Endothelial cell of umbilical vein (primary cell): ENCODE measurements at regions of chr1 and their contacts with region 1.

Region 1: GRCh38 chr1:110196917-110197765 is 13.0 kb upstream of the KCNC4 start:
- DNase-seq: peak; percentile 34
- H3K4me3 ChIP-seq: no peak overlapping the region
- H3K27ac ChIP-seq: no peak overlapping the region
- H3K4me1 ChIP-seq: no peaks in the 10 kb centered on the region
- H3K27me3 ChIP-seq: no peaks in the 10 kb centered on the region
- CTCF ChIP-seq: peak; percentile 75 to 92
- POLR2A ChIP-seq: no peak

Region 2: DNA sequence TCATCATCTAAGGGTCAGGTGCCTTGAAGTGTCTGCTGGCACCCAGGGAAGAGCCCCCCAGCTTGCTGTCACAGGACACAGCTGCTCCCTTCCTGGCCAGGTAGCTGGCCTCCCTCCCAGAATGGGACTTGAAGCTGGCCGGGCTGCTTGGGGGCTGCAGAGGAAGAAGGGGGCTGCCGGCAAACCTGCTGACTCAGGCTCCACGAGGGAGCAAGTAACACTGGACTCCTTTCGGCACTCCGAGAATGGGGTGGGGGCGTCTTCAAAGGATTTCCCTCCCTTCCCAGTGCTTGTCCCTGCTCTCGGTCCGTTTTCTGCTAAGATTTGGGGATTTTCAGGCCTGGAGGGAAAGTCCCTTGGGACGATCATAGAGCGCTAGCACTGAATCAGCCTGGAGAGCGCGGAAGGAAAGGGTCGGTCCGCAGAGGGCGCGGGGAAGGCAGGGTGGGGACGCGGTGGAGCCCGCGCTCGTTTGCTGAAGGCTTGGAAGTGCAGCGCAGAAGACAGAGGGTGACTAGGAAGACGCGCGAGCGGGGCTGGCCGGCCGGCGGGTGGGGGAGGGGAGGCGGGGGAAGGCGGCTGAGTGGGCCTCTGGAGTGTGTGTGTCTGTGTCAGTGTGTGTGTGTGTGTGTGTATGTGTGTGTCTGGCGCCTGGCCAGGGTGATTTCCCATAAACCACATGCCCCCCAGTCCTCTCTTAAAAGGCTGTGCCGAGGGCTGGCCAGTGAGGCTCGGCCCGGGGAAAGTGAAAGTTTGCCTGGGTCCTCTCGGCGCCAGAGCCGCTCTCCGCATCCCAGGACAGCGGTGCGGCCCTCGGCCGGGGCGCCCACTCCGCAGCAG is 286.8 kb before region 1 on chr1 and contains the start of gene CSF1:
- CTCF ChIA-PET with region 1: no interaction called
- POLR2A ChIA-PET with region 1: no interaction called
- dilution Hi-C with region 1: no loop called
- intact Hi-C with region 1: no loop called
- DNase-seq: peak; percentile 77
- H3K4me3 ChIP-seq: peak within 1 kb of the TSS; percentile 36 to 91 (median 45)
- H3K27ac ChIP-seq: peak within 1 kb of the TSS; percentile 45
- H3K4me1 ChIP-seq: peaks cover 8% of the 10 kb centered on the region
- H3K27me3 ChIP-seq: peaks cover 0 to 4% of the 10 kb centered on the region in 2 experiments
- CTCF ChIP-seq: no peak
- POLR2A ChIP-seq: no peak
- total RNA-seq, gene CSF1: 22.7 and 28.9 TPM in 2 replicates

Region 3: DNA sequence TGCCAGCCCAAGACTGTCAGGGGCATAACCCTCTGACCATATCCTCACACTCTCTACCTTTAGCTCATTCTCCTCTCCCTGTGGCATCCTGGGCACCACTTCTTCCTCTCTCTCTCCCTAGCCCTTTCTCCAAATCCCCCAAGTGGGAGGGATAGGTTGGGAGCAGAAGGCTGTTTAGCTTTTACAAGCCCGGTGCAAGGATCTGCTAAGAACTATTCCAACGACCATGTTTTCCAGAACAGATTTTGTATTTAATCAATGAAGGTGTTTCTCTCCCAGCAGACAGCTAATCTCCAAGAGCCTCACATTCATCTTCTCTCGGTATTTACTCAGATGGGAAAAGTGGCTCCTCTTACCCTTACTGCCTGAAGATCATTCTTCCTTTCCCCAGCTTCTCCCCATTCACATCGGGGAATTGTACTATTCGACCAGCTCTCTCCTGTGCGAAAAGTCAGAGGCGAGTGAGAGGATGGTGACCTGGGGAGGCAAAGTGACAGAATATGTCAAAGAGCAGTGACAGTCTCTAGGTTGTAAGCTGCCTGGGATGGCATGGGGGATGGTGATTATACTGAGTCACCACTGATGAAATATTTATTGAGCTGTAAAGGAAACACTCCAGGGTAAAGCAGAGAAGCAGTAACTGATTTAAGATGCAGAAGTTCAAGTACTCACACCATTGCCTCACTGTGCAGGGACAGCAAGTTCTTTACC is 95.0 kb after region 1 on chr1:
- CTCF ChIA-PET with region 1: interaction called, 1,577 read pairs
- POLR2A ChIA-PET with region 1: no interaction called
- dilution Hi-C with region 1: no loop called
- intact Hi-C with region 1: no loop called
- DNase-seq: peak; percentile 12
- H3K4me3 ChIP-seq: no peak overlapping the region
- H3K27ac ChIP-seq: no peak overlapping the region
- H3K4me1 ChIP-seq: no peaks in the 10 kb centered on the region
- H3K27me3 ChIP-seq: peaks cover 5 to 9% of the 10 kb centered on the region in 2 experiments
- CTCF ChIP-seq: no peak
- POLR2A ChIP-seq: no peak

Region 4: DNA sequence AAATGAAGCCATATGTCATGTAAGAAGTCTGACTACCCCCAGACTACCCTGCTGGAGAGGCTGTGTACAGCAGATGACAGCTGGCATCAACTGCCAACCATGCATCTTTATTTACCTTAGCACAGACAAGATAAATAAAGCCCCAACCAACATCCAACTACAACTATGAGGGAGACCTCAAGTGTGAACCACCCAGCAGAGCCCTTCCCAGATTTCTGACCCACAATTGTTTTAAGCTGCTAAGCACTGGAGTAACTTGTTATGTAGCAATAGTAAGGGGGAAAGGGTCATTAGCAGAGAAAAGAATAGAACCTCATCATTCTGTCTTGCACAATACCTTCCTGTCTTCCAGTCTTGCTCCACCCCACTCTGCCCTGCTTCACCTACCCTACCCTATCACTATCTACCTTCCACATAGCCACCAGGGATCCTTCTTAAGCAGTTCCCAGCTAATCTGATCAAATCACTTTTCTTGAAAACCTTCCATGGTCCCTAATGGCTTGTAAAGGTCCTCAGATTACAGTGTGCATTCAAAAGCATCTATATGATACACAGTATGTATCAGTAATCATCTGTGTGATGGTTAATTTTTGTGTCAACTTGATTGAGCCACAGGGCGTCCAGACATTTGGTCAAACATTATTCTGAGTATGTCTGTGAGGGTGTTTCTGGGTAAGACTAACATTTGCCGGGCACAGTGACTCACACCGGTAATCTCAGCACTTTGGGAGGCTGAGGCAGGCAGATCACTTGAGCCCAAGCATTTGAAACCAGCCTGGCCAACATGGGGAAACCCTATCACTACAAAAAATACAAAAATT is 122.4 kb after region 1 on chr1:
- CTCF ChIA-PET with region 1: interaction called, 1,577 read pairs
- POLR2A ChIA-PET with region 1: no interaction called
- dilution Hi-C with region 1: no loop called
- intact Hi-C with region 1: no loop called
- DNase-seq: no peak
- H3K4me3 ChIP-seq: no peak overlapping the region
- H3K27ac ChIP-seq: no peak overlapping the region
- H3K4me1 ChIP-seq: no peaks in the 10 kb centered on the region
- H3K27me3 ChIP-seq: no peaks in the 10 kb centered on the region
- CTCF ChIP-seq: no peak
- POLR2A ChIP-seq: no peak

Region 5: GRCh38 chr1:110780600-110781484 is 583.7 kb after region 1 on chr1:
- CTCF ChIA-PET with region 1: no interaction called
- POLR2A ChIA-PET with region 1: no interaction called
- dilution Hi-C with region 1: no loop called
- intact Hi-C with region 1: no loop called
- DNase-seq: peak; percentile 82
- H3K4me3 ChIP-seq: no peak overlapping the region
- H3K27ac ChIP-seq: no peak overlapping the region
- H3K4me1 ChIP-seq: no peaks in the 10 kb centered on the region
- H3K27me3 ChIP-seq: no peaks in the 10 kb centered on the region
- CTCF ChIP-seq: peak; percentile 69 to 86
- POLR2A ChIP-seq: no peak